Heart left ventricle (tissue), 16 donors: ENCODE measurements at regions of chr4 and their contacts with region 1.

Region 1: DNA sequence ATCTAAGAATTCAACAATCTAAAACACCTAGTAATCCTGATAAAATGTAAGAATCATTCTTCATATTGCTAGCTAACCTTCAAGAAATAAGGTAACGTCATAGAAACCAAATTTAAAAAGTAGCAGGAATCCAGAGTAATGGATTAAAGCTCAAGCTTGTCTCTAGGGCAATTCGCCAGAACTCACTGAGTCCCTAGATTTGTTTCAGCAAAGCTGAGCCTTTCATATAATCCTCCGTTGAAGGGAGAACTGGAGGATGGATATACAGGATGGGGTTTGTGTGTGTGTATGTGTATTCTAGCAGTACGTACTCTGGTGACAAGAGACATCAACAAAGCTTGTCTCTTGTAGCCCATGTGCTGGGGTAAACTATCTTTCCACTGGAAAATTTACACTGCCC is 2173.5 kb upstream of the AGA start:
- DNase-seq: no peak
- ATAC-seq: no peak
- H3K4me3 ChIP-seq: no peak overlapping the region
- H3K27ac ChIP-seq: no peak overlapping the region
- H3K4me1 ChIP-seq: no peaks in the 10 kb centered on the region
- H3K27me3 ChIP-seq: no peaks in the 10 kb centered on the region
- CTCF ChIP-seq: no peak
- POLR2A ChIP-seq: no peak

Region 2: GRCh38 chr4:179563741-179564140 is 52.0 kb before region 1 on chr4:
- intact Hi-C with region 1: no loop called
- DNase-seq: no peak
- ATAC-seq: no peak
- H3K4me3 ChIP-seq: no peak overlapping the region
- H3K27ac ChIP-seq: no peak overlapping the region
- H3K4me1 ChIP-seq: no peaks in the 10 kb centered on the region
- H3K27me3 ChIP-seq: no peaks in the 10 kb centered on the region
- CTCF ChIP-seq: no peak
- POLR2A ChIP-seq: no peak

Region 3: GRCh38 chr4:179631321-179631720 is 15.6 kb after region 1 on chr4:
- intact Hi-C with region 1: loop called in 1 of 10 experiments (anchors 2 kb)
- DNase-seq: no peak
- ATAC-seq: no peak
- H3K4me3 ChIP-seq: no peak overlapping the region
- H3K27ac ChIP-seq: no peak overlapping the region
- H3K4me1 ChIP-seq: no peaks in the 10 kb centered on the region
- H3K27me3 ChIP-seq: no peaks in the 10 kb centered on the region
- CTCF ChIP-seq: no peak
- POLR2A ChIP-seq: no peak

Region 4: GRCh38 chr4:180041576-180041975 is 425.9 kb after region 1 on chr4:
- intact Hi-C with region 1: no loop called
- DNase-seq: no peak
- ATAC-seq: no peak
- H3K4me3 ChIP-seq: no peak overlapping the region
- H3K27ac ChIP-seq: no peak overlapping the region
- H3K4me1 ChIP-seq: no peaks in the 10 kb centered on the region
- H3K27me3 ChIP-seq: peaks cover 0 to 5% (median 0%) of the 10 kb centered on the region in 9 donors
- CTCF ChIP-seq: no peak
- POLR2A ChIP-seq: no peak